CD8-positive, alpha-beta memory T cell (primary cell): ENCODE measurements at regions of chr2 and their contacts with region 1.

Region 1: GRCh38 chr2:181457121-181457740 is at the start of gene ITGA4:
- DNase-seq: peak; percentile 76 to 90 (median 84)
- H3K4me3 ChIP-seq: peak within 1 kb of the TSS; percentile 81
- H3K4me3 Mint-ChIP-seq: peak within 1 kb of the TSS; percentile 90 to 100 (median 95)
- H3K27ac ChIP-seq: peak within 1 kb of the TSS; percentile 88
- H3K27ac Mint-ChIP-seq: peak within 1 kb of the TSS; percentile 92 to 99 (median 96)
- H3K4me1 ChIP-seq: peaks cover 26% of the 10 kb centered on the region
- H3K4me1 Mint-ChIP-seq: peaks cover 39 to 54% (median 53%) of the 10 kb centered on the region in 3 donors
- H3K27me3 ChIP-seq: no peaks in the 10 kb centered on the region
- H3K27me3 Mint-ChIP-seq: no peaks in the 10 kb centered on the region
- total RNA-seq, gene ITGA4: 142 TPM

Region 2: GRCh38 chr2:181123798-181124231 is 333.4 kb before region 1 on chr2:
- CTCF ChIA-PET with region 1: interaction called, 13 read pairs
- POLR2A ChIA-PET with region 1: interaction called, 3 read pairs
- DNase-seq: peak; percentile 30 to 88 (median 85)
- H3K4me3 ChIP-seq: peak overlapping the region; percentile 56
- H3K4me3 Mint-ChIP-seq: peak overlapping the region; percentile 70 to 89 (median 83)
- H3K27ac ChIP-seq: peak overlapping the region; percentile 91
- H3K27ac Mint-ChIP-seq: peak overlapping the region; percentile 94 to 100 (median 98)
- H3K4me1 ChIP-seq: peaks cover 61% of the 10 kb centered on the region
- H3K4me1 Mint-ChIP-seq: peaks cover 70 to 88% (median 84%) of the 10 kb centered on the region in 3 donors
- H3K27me3 ChIP-seq: no peaks in the 10 kb centered on the region
- H3K27me3 Mint-ChIP-seq: no peaks in the 10 kb centered on the region

Region 3: DNA sequence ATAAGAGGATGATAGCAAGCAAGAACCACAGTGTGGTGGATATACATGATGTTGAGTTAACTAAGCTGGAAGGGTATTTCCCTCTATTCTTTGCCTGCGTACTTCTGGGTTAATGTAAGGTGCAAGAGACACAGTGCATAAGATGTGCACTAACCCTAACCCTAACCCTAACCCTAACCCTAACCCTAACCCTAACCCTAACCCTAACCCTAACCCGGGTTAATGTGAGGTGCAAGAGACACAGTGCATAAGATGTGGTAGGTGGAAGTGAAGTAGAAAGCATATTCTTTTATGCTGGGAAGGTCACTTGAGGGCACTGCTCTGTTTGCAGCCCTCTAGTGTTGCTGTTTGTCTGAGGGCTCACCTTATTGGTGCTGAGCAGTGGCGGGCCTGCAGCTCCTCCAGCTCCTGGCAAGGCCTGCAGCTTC is 181.6 kb before region 1 on chr2:
- CTCF ChIA-PET with region 1: interaction called, 20 read pairs
- POLR2A ChIA-PET with region 1: interaction called, 4 read pairs
- DNase-seq: peak in 4 of 5 donors; percentile 2 to 61 (median 50)
- H3K4me3 ChIP-seq: no peak overlapping the region
- H3K4me3 Mint-ChIP-seq: peak overlapping the region in 5 of 7 donors; percentile 34 to 63 (median 43)
- H3K27ac ChIP-seq: no peak overlapping the region
- H3K27ac Mint-ChIP-seq: peak overlapping the region; percentile 75 to 93 (median 90)
- H3K4me1 ChIP-seq: peaks cover 25% of the 10 kb centered on the region
- H3K4me1 Mint-ChIP-seq: peaks cover 50 to 75% (median 60%) of the 10 kb centered on the region in 3 donors
- H3K27me3 ChIP-seq: no peaks in the 10 kb centered on the region
- H3K27me3 Mint-ChIP-seq: no peaks in the 10 kb centered on the region

Region 4: GRCh38 chr2:181393472-181393871 is 63.8 kb before region 1 on chr2:
- CTCF ChIA-PET with region 1: interaction called, 11 read pairs
- POLR2A ChIA-PET with region 1: interaction called, 6 read pairs
- DNase-seq: peak in 2 of 5 donors; percentile 5 to 58
- H3K4me3 ChIP-seq: peak overlapping the region; percentile 24
- H3K4me3 Mint-ChIP-seq: peak overlapping the region; percentile 80 to 95 (median 87)
- H3K27ac ChIP-seq: peak overlapping the region; percentile 78
- H3K27ac Mint-ChIP-seq: peak overlapping the region; percentile 91 to 99 (median 96)
- H3K4me1 ChIP-seq: peaks cover 19% of the 10 kb centered on the region
- H3K4me1 Mint-ChIP-seq: peaks cover 28 to 58% (median 43%) of the 10 kb centered on the region in 3 donors
- H3K27me3 ChIP-seq: no peaks in the 10 kb centered on the region
- H3K27me3 Mint-ChIP-seq: no peaks in the 10 kb centered on the region

Region 5: DNA sequence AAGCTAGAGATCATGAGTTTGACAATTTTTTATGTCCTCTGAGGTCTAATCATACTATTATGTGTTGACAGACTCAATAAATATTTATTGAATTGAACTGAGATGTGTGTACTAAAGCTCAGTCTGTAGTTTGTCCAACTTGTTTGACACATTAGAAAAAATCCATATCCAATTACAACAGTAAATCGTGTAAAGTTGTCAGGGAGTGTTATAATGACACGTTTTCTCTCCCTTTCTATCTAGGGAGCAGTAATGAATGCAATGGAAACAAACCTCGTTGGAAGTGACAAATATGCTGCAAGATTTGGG is 28.4 kb after region 1 on chr2:
- CTCF ChIA-PET with region 1: no interaction called
- POLR2A ChIA-PET with region 1: no interaction called
- DNase-seq: no peak
- H3K4me3 ChIP-seq: no peak overlapping the region
- H3K4me3 Mint-ChIP-seq: no peak overlapping the region
- H3K27ac ChIP-seq: no peak overlapping the region
- H3K27ac Mint-ChIP-seq: peak overlapping the region in 4 of 8 donors; percentile 15 to 43 (median 24)
- H3K4me1 ChIP-seq: no peaks in the 10 kb centered on the region
- H3K4me1 Mint-ChIP-seq: peaks cover 47 to 77% (median 53%) of the 10 kb centered on the region in 3 donors
- H3K27me3 ChIP-seq: no peaks in the 10 kb centered on the region
- H3K27me3 Mint-ChIP-seq: no peaks in the 10 kb centered on the region